ENCODE measurements at regions of chr1 and their contacts with region 1.

Region 1: DNA sequence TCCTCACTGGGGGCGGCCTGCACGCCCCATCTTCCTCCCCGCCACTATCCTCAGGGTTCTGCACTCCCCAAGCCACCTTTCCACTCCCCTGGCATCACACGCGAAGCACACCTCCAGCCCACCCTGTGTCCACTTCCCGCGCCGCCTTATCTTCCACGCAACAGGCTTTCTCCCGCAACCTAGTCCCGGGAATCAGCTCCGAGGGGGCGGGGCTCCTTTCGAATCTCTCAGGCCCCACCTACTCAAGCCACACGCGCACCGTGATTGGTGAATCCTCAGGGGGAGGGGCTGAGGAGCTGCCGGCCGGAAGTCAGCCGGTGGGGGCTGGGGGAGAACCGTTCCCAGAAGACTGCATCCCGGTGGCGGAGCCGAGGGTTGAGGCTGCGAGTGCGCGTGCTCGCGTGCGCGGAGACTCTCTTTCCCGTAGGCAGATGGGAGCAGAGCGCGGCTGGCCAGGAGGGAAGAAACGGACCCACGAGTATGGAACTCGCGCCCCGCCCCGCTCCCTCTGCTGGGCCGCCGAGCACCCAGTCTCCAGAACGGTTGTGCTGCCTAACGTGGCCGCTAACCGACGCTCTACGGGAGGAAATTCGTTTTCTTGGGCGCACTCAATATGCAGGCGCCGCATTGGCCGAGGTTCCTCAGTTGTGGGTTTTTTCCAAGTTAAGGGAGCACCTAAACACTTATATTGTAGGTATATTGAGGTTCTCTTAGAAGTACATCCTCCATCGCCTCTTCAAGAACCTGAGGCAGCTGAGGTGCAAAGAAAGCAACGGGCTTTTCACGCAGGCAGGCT is at the start of gene PSRC1:
- DNase-seq: peak; percentile 89 to 94
- H3K4me3 ChIP-seq: peak within 1 kb of the TSS; percentile 76
- H3K27ac ChIP-seq: peak within 1 kb of the TSS; percentile 70
- H3K4me1 ChIP-seq: peaks cover 25% of the 10 kb centered on the region
- H3K27me3 ChIP-seq: no peaks in the 10 kb centered on the region
- CTCF ChIP-seq: peak; percentile 57
- total RNA-seq, gene PSRC1: 26.4 and 28.6 TPM in 2 replicates

Region 2: GRCh38 chr1:108947871-108948525 is 335.2 kb before region 1 on chr1:
- CTCF ChIA-PET with region 1: no interaction called
- POLR2A ChIA-PET with region 1: no interaction called
- intact Hi-C with region 1: no loop called
- DNase-seq: no peak
- H3K4me3 ChIP-seq: no peak overlapping the region
- H3K27ac ChIP-seq: no peak overlapping the region
- H3K4me1 ChIP-seq: no peaks in the 10 kb centered on the region
- H3K27me3 ChIP-seq: no peaks in the 10 kb centered on the region
- CTCF ChIP-seq: no peak

Region 3: DNA sequence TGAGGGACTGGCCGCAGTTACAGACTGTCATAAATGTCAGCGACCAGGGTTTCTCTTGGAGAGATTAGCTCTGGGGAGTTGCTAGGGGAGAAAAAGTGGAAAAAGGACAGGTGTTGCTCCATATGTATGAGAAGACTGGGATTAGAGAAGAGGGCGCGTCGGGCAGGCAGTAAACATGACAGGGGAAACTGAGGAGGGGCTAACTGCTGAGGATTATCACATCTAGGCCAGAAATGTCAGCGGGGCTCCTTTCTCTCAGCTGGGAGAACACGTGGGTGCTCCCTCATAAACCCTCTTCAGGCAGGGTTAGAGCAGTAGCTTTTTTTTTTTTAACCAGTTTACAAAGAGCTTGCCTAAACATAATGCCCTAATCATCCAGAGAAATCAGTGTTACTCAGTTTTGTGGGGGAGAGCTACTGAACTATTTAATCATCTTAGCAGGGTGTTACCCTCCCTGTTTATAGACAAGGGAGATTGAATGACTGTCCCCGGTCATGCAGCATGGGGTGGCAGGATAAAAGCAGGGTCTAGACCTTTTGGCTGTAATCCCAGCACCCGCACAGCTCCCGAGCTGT is 134.1 kb before region 1 on chr1:
- CTCF ChIA-PET with region 1: no interaction called
- POLR2A ChIA-PET with region 1: no interaction called
- intact Hi-C with region 1: no loop called
- DNase-seq: no peak
- H3K4me3 ChIP-seq: no peak overlapping the region
- H3K27ac ChIP-seq: no peak overlapping the region
- H3K4me1 ChIP-seq: peaks cover 8% of the 10 kb centered on the region; the same call in 1 of the 2 replicates
- H3K27me3 ChIP-seq: no peaks in the 10 kb centered on the region
- CTCF ChIP-seq: no peak

Region 4: GRCh38 chr1:109239580-109240095 is 43.5 kb before region 1 on chr1:
- CTCF ChIA-PET with region 1: no interaction called
- POLR2A ChIA-PET with region 1: no interaction called
- intact Hi-C with region 1: no loop called
- DNase-seq: peak; percentile 36 to 66
- H3K4me3 ChIP-seq: no peak overlapping the region
- H3K27ac ChIP-seq: peak overlapping the region; percentile 92
- H3K4me1 ChIP-seq: peaks cover 38% of the 10 kb centered on the region
- H3K27me3 ChIP-seq: no peaks in the 10 kb centered on the region
- CTCF ChIP-seq: peak; percentile 80

Region 5: GRCh38 chr1:109383080-109383769 is 100.1 kb after region 1 on chr1:
- CTCF ChIA-PET with region 1: no interaction called
- POLR2A ChIA-PET with region 1: interaction called, 10 read pairs
- intact Hi-C with region 1: no loop called
- DNase-seq: peak in 1 of 2 experiments; percentile 68
- H3K4me3 ChIP-seq: no peak overlapping the region
- H3K27ac ChIP-seq: 0 out of 2 replicates have a peak overlapping the region, but pooled peaks have one; percentile 5
- H3K4me1 ChIP-seq: peaks cover 22% of the 10 kb centered on the region; the same call in 1 of the 2 replicates
- H3K27me3 ChIP-seq: no peaks in the 10 kb centered on the region
- CTCF ChIP-seq: no peak

Region 6: GRCh38 chr1:109466452-109467300 is 183.5 kb after region 1 on chr1 and contains the start of gene SYPL2:
- CTCF ChIA-PET with region 1: no interaction called
- POLR2A ChIA-PET with region 1: no interaction called
- intact Hi-C with region 1: no loop called
- DNase-seq: peak in 1 of 2 experiments; percentile 18
- H3K4me3 ChIP-seq: peak within 1 kb of the TSS; percentile 27; the same call in 1 of the 2 replicates
- H3K27ac ChIP-seq: no peak within 1 kb of the TSS
- H3K4me1 ChIP-seq: no peaks in the 10 kb centered on the region
- H3K27me3 ChIP-seq: peaks cover 93% of the 10 kb centered on the region
- CTCF ChIP-seq: no peak
- total RNA-seq, gene SYPL2: 0.09 and 0.28 TPM in 2 replicates

Measured in PC-9 (cell line).